ENCODE measurements at regions of chr3 and their contacts with region 1.

Region 1: GRCh38 chr3:170189398-170190256 is 8.1 kb upstream of the PHC3 start:
- DNase-seq: no peak
- ATAC-seq: no peak
- H3K4me3 ChIP-seq: no peak overlapping the region
- H3K4me3 Mint-ChIP-seq: no peak overlapping the region
- H3K27ac ChIP-seq: no peak overlapping the region
- H3K27ac Mint-ChIP-seq: no peak overlapping the region
- H3K4me1 ChIP-seq: no peaks in the 10 kb centered on the region
- H3K4me1 Mint-ChIP-seq: peaks cover 8% of the 10 kb centered on the region
- H3K27me3 ChIP-seq: peaks cover 0 to 3% of the 10 kb centered on the region in 2 experiments
- H3K27me3 Mint-ChIP-seq: no peaks in the 10 kb centered on the region
- CTCF ChIP-seq: no peak

Region 2: DNA sequence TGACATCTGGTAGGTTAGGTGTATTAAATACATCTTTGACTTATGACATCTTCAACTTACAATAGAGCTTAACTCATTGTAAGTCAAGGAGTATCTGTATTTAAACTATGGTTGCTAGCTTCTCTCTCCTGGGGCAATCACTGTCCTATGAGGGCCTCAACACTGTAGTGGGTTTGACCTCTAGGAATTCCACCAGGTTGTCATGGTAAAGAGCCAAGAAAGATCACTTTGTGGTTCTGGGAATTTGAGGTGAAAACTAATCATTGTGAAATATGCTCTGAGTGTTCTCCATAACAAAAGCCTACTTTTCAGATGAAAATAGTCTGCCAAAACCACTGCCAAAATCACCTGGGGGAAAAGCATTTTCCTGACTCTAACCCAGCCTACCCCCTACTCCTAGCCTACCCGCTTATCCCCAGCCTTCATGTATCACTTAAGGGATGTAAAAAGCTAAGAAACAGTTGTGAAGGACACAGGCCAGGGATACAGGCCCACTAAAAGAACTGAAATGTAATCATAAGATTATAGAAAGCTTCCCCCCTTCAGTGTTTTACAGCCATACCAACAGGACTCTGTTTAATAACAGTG is 1249.9 kb before region 1 on chr3:
- CTCF ChIA-PET with region 1: no interaction called
- POLR2A ChIA-PET with region 1: no interaction called
- intact Hi-C with region 1: no loop called
- DNase-seq: no peak
- ATAC-seq: no peak
- H3K4me3 ChIP-seq: no peak overlapping the region
- H3K4me3 Mint-ChIP-seq: no peak overlapping the region
- H3K27ac ChIP-seq: no peak overlapping the region
- H3K27ac Mint-ChIP-seq: no peak overlapping the region
- H3K4me1 ChIP-seq: no peaks in the 10 kb centered on the region
- H3K4me1 Mint-ChIP-seq: no peaks in the 10 kb centered on the region
- H3K27me3 ChIP-seq: no peaks in the 10 kb centered on the region
- H3K27me3 Mint-ChIP-seq: no peaks in the 10 kb centered on the region
- CTCF ChIP-seq: no peak

Region 3: GRCh38 chr3:169835533-169835932 is 354.1 kb before region 1 on chr3:
- CTCF ChIA-PET with region 1: no interaction called
- POLR2A ChIA-PET with region 1: no interaction called
- intact Hi-C with region 1: no loop called
- DNase-seq: no peak
- ATAC-seq: no peak
- H3K4me3 ChIP-seq: no peak overlapping the region
- H3K4me3 Mint-ChIP-seq: no peak overlapping the region
- H3K27ac ChIP-seq: no peak overlapping the region
- H3K27ac Mint-ChIP-seq: no peak overlapping the region
- H3K4me1 ChIP-seq: no peaks in the 10 kb centered on the region
- H3K4me1 Mint-ChIP-seq: no peaks in the 10 kb centered on the region
- H3K27me3 ChIP-seq: no peaks in the 10 kb centered on the region
- H3K27me3 Mint-ChIP-seq: peaks cover 9% of the 10 kb centered on the region
- CTCF ChIP-seq: no peak

Region 4: GRCh38 chr3:170221924-170222646 is 32.5 kb after region 1 on chr3 and contains the start of gene PRKCI:
- CTCF ChIA-PET with region 1: no interaction called
- POLR2A ChIA-PET with region 1: no interaction called
- intact Hi-C with region 1: loop called (anchors 2 kb)
- DNase-seq: peak; percentile 75 to 94 (median 86)
- ATAC-seq: peak; percentile 83
- H3K4me3 ChIP-seq: peak within 1 kb of the TSS; percentile 64 to 92
- H3K4me3 Mint-ChIP-seq: peak within 1 kb of the TSS; percentile 91
- H3K27ac ChIP-seq: peak within 1 kb of the TSS; percentile 76 to 82
- H3K27ac Mint-ChIP-seq: peak within 1 kb of the TSS; percentile 93
- H3K4me1 ChIP-seq: peaks cover 3% of the 10 kb centered on the region
- H3K4me1 Mint-ChIP-seq: peaks cover 36% of the 10 kb centered on the region
- H3K27me3 ChIP-seq: no peaks in the 10 kb centered on the region
- H3K27me3 Mint-ChIP-seq: no peaks in the 10 kb centered on the region
- CTCF ChIP-seq: no peak
- total RNA-seq, gene PRKCI: 17.6 to 20.2 TPM

Region 5: GRCh38 chr3:170368921-170369320 is 179.3 kb after region 1 on chr3:
- CTCF ChIA-PET with region 1: interaction called, 3 read pairs
- POLR2A ChIA-PET with region 1: no interaction called
- intact Hi-C with region 1: loop called (anchors 1 to 5 kb)
- DNase-seq: peak in 2 of 9 experiments; percentile 33 to 55
- ATAC-seq: no peak
- H3K4me3 ChIP-seq: no peak overlapping the region
- H3K4me3 Mint-ChIP-seq: no peak overlapping the region
- H3K27ac ChIP-seq: no peak overlapping the region
- H3K27ac Mint-ChIP-seq: no peak overlapping the region
- H3K4me1 ChIP-seq: peaks cover 12% of the 10 kb centered on the region
- H3K4me1 Mint-ChIP-seq: peaks cover 43% of the 10 kb centered on the region
- H3K27me3 ChIP-seq: no peaks in the 10 kb centered on the region
- H3K27me3 Mint-ChIP-seq: no peaks in the 10 kb centered on the region
- CTCF ChIP-seq: peak; percentile 56

Region 6: GRCh38 chr3:170387950-170388349 is 198.3 kb after region 1 on chr3:
- CTCF ChIA-PET with region 1: interaction called, 3 read pairs
- POLR2A ChIA-PET with region 1: no interaction called
- intact Hi-C with region 1: loop called in 1 of 2 experiments (anchors 5 kb)
- DNase-seq: no peak
- ATAC-seq: no peak
- H3K4me3 ChIP-seq: no peak overlapping the region
- H3K4me3 Mint-ChIP-seq: no peak overlapping the region
- H3K27ac ChIP-seq: no peak overlapping the region
- H3K27ac Mint-ChIP-seq: no peak overlapping the region
- H3K4me1 ChIP-seq: no peaks in the 10 kb centered on the region
- H3K4me1 Mint-ChIP-seq: peaks cover 3% of the 10 kb centered on the region
- H3K27me3 ChIP-seq: no peaks in the 10 kb centered on the region
- H3K27me3 Mint-ChIP-seq: no peaks in the 10 kb centered on the region
- CTCF ChIP-seq: no peak

Region 7: DNA sequence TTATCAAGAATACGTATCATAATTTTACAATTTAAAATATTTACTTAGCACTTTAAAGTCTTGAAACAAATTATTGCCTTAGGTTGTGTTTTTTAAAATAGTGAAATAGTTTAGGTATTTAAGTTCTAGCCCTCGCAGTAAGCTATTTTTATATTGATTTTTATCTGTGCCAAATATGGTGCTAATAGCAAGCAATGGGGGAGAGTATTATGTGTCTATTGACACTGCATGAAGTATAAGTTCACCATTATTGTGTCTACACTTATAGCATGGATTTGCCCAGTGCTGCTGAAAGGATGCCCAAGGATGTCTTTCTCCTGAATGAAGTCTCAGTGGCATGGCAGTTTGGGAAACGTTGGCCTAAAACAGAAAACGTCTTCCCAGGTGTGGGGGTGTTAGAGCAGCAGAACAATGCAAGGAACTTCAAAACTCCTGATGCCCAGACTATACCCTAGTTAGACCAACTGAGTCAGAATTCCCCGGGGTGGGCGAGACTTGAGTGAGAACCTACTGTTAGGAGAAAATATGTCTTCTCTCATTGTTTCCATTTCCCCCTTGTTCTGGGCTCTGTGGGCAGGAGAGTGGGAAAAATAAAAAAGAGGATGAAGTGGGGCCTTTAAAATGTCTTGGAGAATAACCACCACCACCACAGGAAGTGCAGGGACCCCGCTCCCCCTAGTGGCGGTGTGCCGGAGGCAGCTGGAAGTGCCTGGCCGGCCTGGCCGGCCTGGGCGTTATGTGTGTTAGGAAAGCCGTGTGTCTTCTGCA is 500.4 kb after region 1 on chr3:
- CTCF ChIA-PET with region 1: no interaction called
- POLR2A ChIA-PET with region 1: no interaction called
- intact Hi-C with region 1: loop called (anchors 5 to 10 kb)
- DNase-seq: peak in 8 of 9 experiments; percentile 17 to 59 (median 28)
- ATAC-seq: no peak
- H3K4me3 ChIP-seq: no peak overlapping the region
- H3K4me3 Mint-ChIP-seq: no peak overlapping the region
- H3K27ac ChIP-seq: no peak overlapping the region
- H3K27ac Mint-ChIP-seq: no peak overlapping the region
- H3K4me1 ChIP-seq: no peaks in the 10 kb centered on the region
- H3K4me1 Mint-ChIP-seq: no peaks in the 10 kb centered on the region
- H3K27me3 ChIP-seq: no peaks in the 10 kb centered on the region
- H3K27me3 Mint-ChIP-seq: no peaks in the 10 kb centered on the region
- CTCF ChIP-seq: peak; percentile 34

Region 8: GRCh38 chr3:170811928-170812591 is 622.4 kb after region 1 on chr3:
- CTCF ChIA-PET with region 1: interaction called, 5 read pairs
- POLR2A ChIA-PET with region 1: no interaction called
- intact Hi-C with region 1: loop called (anchors 1 to 5 kb)
- DNase-seq: peak; percentile 37 to 78 (median 59)
- ATAC-seq: peak; percentile 98
- H3K4me3 ChIP-seq: no peak overlapping the region
- H3K4me3 Mint-ChIP-seq: no peak overlapping the region
- H3K27ac ChIP-seq: no peak overlapping the region
- H3K27ac Mint-ChIP-seq: no peak overlapping the region
- H3K4me1 ChIP-seq: no peaks in the 10 kb centered on the region
- H3K4me1 Mint-ChIP-seq: no peaks in the 10 kb centered on the region
- H3K27me3 ChIP-seq: peaks cover 0 to 2% of the 10 kb centered on the region in 2 experiments
- H3K27me3 Mint-ChIP-seq: peaks cover 2% of the 10 kb centered on the region
- CTCF ChIP-seq: peak; percentile 87

Measured in CD8-positive, alpha-beta T cell (primary cell).